Colonic mucosa (tissue), 4 donors: ENCODE measurements at regions of chr13 and their contacts with region 1.

Region 1: DNA sequence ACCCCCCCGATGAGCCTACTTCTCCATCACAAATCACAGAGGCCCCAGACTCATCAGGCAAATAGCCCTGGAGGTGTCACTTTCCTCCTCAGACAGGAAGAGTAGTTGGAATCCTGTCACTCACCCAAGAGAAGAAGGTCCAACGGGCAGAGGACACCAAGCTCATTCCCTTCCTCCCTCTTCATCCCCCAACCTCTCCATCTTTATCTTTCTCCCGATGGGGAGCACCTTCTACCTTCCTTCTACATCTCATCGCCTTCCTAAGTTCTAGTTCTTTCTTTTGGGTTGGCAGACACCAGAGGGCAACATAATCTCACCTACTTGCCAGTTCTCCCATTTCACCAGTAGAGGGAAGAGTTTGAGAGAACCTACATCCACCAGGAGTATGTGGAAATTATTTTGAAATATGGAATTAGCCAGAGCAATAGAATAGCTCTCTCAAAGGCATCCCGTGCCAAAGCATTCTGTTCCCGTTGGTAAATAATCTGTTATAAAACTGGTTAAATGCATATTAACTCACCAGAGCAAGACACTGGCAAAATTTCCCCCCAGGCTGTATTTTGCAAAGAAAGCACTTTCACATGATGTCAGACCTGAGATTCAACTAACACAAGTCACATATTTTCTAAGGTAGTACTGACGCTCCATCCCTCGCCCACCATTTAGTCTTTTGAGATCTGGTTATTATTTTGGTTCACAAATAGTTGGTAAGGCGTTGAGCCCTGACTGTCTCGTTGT is 55.0 kb downstream of the ZIC5 start:
- DNase-seq: peak; percentile 46
- H3K4me3 ChIP-seq: no peak overlapping the region
- H3K27ac ChIP-seq: no peak overlapping the region
- H3K4me1 ChIP-seq: no peaks in the 10 kb centered on the region
- H3K27me3 ChIP-seq: no peaks in the 10 kb centered on the region
- CTCF ChIP-seq: peak; percentile 87

Region 2: DNA sequence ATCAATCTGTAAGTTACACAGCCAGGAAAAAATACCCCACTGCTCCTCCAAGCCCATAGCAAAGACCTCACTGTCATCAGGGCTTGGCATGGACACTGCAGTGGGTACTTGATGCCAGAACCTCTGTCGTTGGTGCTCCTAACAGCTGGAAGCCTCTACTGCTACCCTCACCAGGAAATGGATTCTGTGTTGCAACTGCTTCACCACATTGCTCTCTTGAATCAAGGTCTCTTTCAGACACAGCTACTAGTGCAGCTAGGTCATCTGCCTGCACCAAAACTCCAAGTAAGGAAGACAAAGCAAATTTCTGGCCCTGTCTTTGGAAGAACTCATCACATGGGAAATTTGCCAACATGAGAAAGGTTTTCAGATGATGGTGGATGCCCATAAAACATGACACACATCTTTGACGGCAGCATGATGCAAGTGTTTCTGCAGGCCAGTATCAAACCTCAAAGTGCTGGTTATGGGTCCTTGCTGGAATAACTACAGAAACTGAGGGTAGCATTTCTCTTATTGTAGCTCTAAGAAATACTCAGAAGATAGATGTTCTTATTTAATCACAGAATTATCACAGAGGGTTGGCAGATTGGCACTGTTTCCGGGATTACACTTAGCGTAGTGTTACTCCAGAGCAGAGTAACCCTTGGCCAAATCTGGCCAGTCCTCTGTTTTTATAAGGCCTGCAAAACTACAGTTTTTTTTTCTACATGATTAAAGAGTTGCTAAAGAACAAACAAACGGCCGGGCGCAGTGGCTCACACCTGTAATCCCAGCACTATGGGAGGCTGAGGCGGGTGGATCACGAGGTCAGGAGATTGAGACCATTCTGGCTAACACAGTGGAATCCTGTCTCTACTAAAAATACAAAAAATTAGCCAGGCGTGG is 159.4 kb after region 1 on chr13:
- intact Hi-C with region 1: no loop called
- DNase-seq: peak; percentile 25
- H3K4me3 ChIP-seq: no peak overlapping the region
- H3K27ac ChIP-seq: no peak overlapping the region
- H3K4me1 ChIP-seq: no peaks in the 10 kb centered on the region
- H3K27me3 ChIP-seq: no peaks in the 10 kb centered on the region
- CTCF ChIP-seq: no peak

Region 3: GRCh38 chr13:100159584-100159983 is 243.0 kb after region 1 on chr13:
- intact Hi-C with region 1: no loop called
- DNase-seq: no peak
- H3K4me3 ChIP-seq: no peak overlapping the region
- H3K27ac ChIP-seq: no peak overlapping the region
- H3K4me1 ChIP-seq: no peaks in the 10 kb centered on the region
- H3K27me3 ChIP-seq: no peaks in the 10 kb centered on the region
- CTCF ChIP-seq: no peak

Region 4: GRCh38 chr13:100334214-100334613 is 417.7 kb after region 1 on chr13:
- intact Hi-C with region 1: no loop called
- DNase-seq: no peak
- H3K4me3 ChIP-seq: no peak overlapping the region
- H3K27ac ChIP-seq: no peak overlapping the region
- H3K4me1 ChIP-seq: no peaks in the 10 kb centered on the region
- H3K27me3 ChIP-seq: no peaks in the 10 kb centered on the region
- CTCF ChIP-seq: no peak

Region 5: GRCh38 chr13:100514788-100515409 is 598.4 kb after region 1 on chr13:
- intact Hi-C with region 1: loop called (anchors 5 kb)
- DNase-seq: peak; percentile 84
- H3K4me3 ChIP-seq: no peak overlapping the region
- H3K27ac ChIP-seq: no peak overlapping the region
- H3K4me1 ChIP-seq: no peaks in the 10 kb centered on the region
- H3K27me3 ChIP-seq: no peaks in the 10 kb centered on the region
- CTCF ChIP-seq: peak; percentile 88